ENCODE measurements at regions of chr2 and their contacts with region 1.

Region 1: DNA sequence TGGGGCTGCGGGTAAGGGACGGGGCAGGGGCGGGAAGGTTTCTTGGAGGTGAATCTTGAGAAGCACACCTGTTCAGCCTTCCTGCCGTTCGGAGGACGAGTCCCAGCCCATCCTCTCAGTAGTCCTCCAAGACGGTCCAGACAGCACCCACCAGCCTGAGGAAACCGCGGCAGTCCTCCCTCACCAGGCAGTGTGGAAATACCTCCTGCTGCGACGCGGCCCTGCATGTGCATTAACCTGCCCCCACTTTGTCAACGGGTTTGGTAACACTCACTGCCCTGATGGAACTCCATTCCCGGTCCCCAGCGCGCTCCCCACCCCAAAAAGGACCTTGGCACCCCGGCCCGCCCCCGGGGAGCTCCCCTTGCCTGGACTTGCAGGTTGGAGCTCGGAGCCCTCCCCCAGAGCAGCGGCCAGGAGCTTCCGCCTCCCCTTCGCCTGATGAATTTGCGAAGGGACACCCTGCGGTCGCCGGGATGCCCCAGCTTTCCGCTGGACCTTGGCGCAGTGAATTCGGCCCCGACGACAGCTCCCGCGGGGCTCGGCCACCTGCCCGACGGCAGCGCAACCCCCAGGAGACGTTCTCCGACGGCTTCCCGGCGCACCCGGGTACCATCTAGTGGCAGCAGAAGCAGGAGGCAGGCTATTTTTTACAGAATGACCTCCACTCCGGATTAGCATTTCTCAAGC is 31.5 kb downstream of the ACVR1C start:
- DNase-seq: peak; percentile 85
- H3K4me3 ChIP-seq: peak overlapping the region in 2 of 8 donors; percentile 19 to 54
- H3K27ac ChIP-seq: no peak overlapping the region
- H3K4me1 ChIP-seq: peaks cover 0 to 8% (median 5%) of the 10 kb centered on the region in 6 donors
- H3K27me3 ChIP-seq: peaks cover 0 to 24% (median 9%) of the 10 kb centered on the region in 7 donors
- CTCF ChIP-seq: peak in 7 of 11 experiments; percentile 12 to 54 (median 42)
- POLR2A ChIP-seq: no peak

Region 2: DNA sequence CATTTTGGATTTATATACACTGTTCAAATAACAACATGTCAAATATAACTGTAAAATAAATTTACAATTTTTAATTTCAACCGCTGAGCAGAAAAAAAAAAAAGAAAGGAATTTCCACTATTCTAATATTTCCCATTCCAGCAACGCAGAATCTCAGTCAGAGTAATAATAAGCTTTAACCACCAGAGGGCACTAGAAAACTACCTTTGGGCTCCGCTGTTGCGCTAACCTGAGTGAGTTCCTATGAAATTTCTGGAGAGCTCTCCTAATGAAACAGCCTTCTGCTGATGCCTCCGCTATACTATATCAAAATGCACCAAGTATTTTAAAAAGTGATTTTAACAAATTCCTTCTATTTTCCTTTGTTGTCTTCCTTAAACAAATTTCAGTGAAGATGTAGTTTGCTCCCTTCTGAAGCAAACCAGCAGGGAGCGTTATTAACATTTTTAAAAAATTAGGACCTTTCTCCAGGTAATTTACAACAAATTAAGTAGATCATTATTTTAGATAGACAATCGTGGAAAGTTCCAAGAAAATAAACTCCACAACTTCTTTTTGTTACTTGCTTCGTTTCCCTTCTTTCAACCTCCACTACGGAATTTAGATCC is 294.5 kb before region 1 on chr2:
- intact Hi-C with region 1: loop called (anchors 10 kb)
- DNase-seq: no peak
- H3K4me3 ChIP-seq: no peak overlapping the region
- H3K27ac ChIP-seq: no peak overlapping the region
- H3K4me1 ChIP-seq: peaks cover 0 to 11% (median 0%) of the 10 kb centered on the region in 6 donors
- H3K27me3 ChIP-seq: peaks cover 0 to 7% (median 0%) of the 10 kb centered on the region in 7 donors
- CTCF ChIP-seq: peak; percentile 40 to 87 (median 73)
- POLR2A ChIP-seq: no peak

Region 3: DNA sequence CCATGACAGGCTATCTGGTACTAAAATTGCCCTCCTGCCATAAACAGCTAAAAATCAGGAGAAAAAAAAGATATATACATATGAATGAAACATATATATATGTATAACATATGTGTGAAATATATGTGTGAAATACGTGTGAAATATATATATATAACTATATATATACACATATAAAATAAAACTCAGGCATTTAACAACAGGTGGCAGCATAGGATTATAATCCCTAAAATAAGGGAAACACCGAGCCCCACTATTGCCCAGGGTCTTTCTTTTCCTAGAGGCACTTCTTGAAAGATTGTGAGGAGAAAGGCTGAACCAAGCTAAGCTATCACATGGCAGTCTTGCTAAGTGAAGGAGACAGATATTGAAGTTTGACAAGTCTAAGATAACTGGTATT is 87.4 kb before region 1 on chr2:
- intact Hi-C with region 1: loop called (anchors 10 kb)
- DNase-seq: no peak
- H3K4me3 ChIP-seq: no peak overlapping the region
- H3K27ac ChIP-seq: no peak overlapping the region
- H3K4me1 ChIP-seq: peaks cover 0 to 7% (median 0%) of the 10 kb centered on the region in 6 donors
- H3K27me3 ChIP-seq: peaks cover 0 to 7% (median 0%) of the 10 kb centered on the region in 7 donors
- CTCF ChIP-seq: no peak
- POLR2A ChIP-seq: no peak